ENCODE measurements at regions of chr1 and their contacts with region 1.

Region 1: GRCh38 chr1:110106013-110106941 is 6.0 kb upstream of the UBL4B start:
- DNase-seq: peak; percentile 60 to 75
- ATAC-seq: peak; percentile 83 to 97
- H3K4me3 ChIP-seq: no peak overlapping the region
- H3K27ac ChIP-seq: peak overlapping the region in 1 of 2 experiments; percentile 64; a peak in 1 of 6 replicates
- H3K4me1 ChIP-seq: no peaks in the 10 kb centered on the region
- CTCF ChIP-seq: peak; percentile 67
- EP300 ChIP-seq: no peak
- POLR2A ChIP-seq: no peak
- RAD21 ChIP-seq: peak; percentile 60 to 75; a peak in 4 of 5 replicates

Region 2: DNA sequence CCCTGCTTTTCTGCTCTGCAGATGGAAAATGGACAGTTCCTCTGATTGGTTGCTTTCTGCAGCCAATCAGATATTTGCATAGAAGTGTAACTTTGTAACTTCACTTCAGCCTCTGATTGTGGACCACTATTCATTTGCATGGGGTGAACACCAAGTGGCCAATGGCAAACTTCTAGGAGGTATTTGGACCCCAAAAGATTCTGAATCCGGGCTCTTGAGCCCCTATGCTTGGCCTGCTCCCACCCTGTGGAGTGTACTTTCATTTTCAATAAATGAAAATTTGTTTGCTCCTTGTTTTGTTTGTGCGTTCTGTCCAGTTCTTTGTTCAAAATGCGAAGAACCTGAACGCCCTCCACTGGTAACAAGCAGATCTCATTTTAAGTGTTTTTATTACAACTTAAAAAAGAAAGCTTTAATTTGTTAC is 456.8 kb before region 1 on chr1:
- CTCF ChIA-PET with region 1: no interaction called
- POLR2A ChIA-PET with region 1: no interaction called
- DNase-seq: peak in 1 of 2 experiments; percentile 46
- ATAC-seq: peak in 1 of 2 experiments; percentile 67; a peak in 3 of 6 replicates
- H3K4me3 ChIP-seq: 0 out of 3 replicates have a peak overlapping the region, but pooled peaks have one; percentile 21
- H3K27ac ChIP-seq: peak overlapping the region; percentile 57 to 63; a peak in 5 of 6 replicates
- H3K4me1 ChIP-seq: peaks cover 17% of the 10 kb centered on the region; the same call in 2 of the 3 replicates
- CTCF ChIP-seq: peak; percentile 55
- EP300 ChIP-seq: no peak
- POLR2A ChIP-seq: no peak
- RAD21 ChIP-seq: peak; percentile 48 to 50

Region 3: GRCh38 chr1:110003747-110004630 is 102.3 kb before region 1 on chr1:
- CTCF ChIA-PET with region 1: no interaction called
- POLR2A ChIA-PET with region 1: no interaction called
- DNase-seq: peak; percentile 47 to 88
- ATAC-seq: peak; percentile 89 to 93
- H3K4me3 ChIP-seq: peak overlapping the region; percentile 47
- H3K27ac ChIP-seq: peak overlapping the region; percentile 84 to 88
- H3K4me1 ChIP-seq: peaks cover 71% of the 10 kb centered on the region
- CTCF ChIP-seq: no peak
- EP300 ChIP-seq: peak; percentile 25 to 47; a peak in 2 of 5 replicates
- POLR2A ChIP-seq: no peak
- RAD21 ChIP-seq: no peak

Region 4: GRCh38 chr1:110082477-110082876 is 23.8 kb before region 1 on chr1:
- CTCF ChIA-PET with region 1: interaction called, 57 read pairs
- POLR2A ChIA-PET with region 1: no interaction called
- DNase-seq: no peak
- ATAC-seq: no peak
- H3K4me3 ChIP-seq: no peak overlapping the region
- H3K27ac ChIP-seq: no peak overlapping the region
- H3K4me1 ChIP-seq: no peaks in the 10 kb centered on the region
- CTCF ChIP-seq: no peak
- EP300 ChIP-seq: no peak
- POLR2A ChIP-seq: no peak
- RAD21 ChIP-seq: no peak

Region 5: DNA sequence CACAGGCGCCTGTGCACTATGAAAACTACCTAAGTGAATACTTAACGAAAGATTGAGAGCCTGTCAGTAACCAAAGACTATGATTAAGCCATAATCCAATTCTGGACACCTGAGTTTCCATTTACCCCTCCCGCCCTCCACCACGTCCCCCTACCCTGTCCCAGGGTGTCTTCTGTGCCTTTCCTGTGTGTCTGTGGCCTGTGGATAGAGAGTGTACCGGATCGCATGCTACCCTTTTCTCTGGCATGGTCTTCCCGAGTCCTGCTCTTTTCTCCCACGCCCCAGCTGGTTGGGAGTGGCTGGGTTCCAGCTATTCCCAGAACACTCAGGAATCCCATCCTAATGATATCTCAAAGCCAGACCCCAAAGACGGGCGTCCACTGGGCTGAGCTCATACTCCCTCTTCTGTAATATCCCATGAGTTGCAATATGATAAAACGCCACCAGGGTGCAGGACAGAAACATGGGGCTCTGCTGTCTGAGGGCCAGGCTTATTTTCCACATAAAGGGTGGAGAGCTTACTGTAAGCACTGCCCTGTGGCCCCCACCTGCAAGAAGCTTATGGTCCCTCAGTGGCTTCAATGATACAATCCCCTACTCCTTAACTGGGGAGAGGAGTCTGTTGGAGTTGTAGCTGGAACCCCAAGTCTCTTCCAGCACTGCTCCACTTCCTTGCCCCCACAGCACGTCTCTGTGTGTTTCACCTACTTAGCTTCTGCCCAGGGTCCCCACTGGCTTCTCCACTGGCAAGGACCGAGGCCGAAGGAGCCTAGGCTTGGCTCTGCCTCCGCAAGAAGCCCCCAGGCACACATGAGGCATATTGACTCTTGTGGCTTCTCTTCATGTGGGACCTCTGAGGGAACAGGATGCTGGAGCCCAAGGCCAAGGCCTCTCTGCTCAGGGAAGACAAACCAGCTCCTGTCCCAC is 18.2 kb before region 1 on chr1:
- CTCF ChIA-PET with region 1: interaction called, 75 read pairs
- POLR2A ChIA-PET with region 1: no interaction called
- DNase-seq: peak; percentile 35 to 64
- ATAC-seq: peak; percentile 90 to 97
- H3K4me3 ChIP-seq: no peak overlapping the region
- H3K27ac ChIP-seq: no peak overlapping the region
- H3K4me1 ChIP-seq: no peaks in the 10 kb centered on the region
- CTCF ChIP-seq: peak; percentile 42; the same call in 1 of the 3 replicates
- EP300 ChIP-seq: no peak
- POLR2A ChIP-seq: no peak
- RAD21 ChIP-seq: peak; percentile 30 to 52; a peak in 3 of 5 replicates

Region 6: GRCh38 chr1:110118636-110119615 is 12.6 kb after region 1 on chr1:
- CTCF ChIA-PET with region 1: interaction called, 17 read pairs
- POLR2A ChIA-PET with region 1: no interaction called
- DNase-seq: no peak
- ATAC-seq: no peak
- H3K4me3 ChIP-seq: no peak overlapping the region
- H3K27ac ChIP-seq: no peak overlapping the region
- H3K4me1 ChIP-seq: no peaks in the 10 kb centered on the region
- CTCF ChIP-seq: no peak
- EP300 ChIP-seq: no peak
- POLR2A ChIP-seq: no peak
- RAD21 ChIP-seq: no peak

Measured in A549 (cell line).